A549 (cell line): ENCODE measurements at regions of chr6 and their contacts with region 1.

Region 1: DNA sequence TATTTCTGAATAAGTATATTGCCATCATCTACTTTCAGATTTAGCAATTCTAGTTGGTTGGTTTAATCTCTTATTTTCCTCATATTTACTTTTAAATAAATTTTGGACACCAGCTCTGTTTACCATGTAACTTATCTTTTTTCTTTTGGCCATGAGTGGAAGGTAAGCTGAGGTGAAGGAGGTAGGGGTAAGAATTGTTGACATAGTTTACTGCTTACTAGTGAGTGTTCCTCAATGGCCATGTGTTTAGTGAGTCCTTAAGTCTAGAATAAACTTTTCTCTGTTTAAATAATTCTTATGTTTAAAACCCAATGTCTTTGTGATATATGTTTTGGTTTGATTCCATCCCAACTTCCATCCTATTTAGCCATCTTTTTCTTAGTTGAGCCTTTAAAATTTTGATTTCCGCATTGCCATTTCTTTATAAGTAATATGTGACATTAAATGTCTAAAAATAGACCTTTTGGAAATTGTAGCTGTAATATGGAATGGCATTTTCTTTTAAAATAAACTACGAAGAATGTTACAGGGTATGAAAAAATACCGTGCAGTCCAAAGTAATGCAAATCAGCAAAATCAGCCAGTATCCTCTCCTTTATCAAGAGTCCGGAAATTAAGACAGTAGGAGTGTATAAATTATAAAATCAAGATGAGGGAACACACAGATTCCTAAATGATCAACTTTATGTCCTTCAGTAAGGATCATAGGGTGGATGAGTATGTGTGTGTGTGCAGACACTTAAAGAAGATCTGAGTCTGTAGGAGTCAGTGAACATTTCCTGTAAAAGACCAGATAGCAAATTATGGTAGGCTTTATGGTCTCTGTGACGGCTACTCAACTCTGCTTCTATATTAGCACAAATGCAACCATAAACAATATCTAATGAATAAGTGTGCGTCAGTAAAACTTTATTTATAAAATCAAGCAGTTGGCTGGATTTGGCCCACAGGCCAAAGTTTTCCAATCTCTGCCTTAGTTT is 10.3 kb downstream of the STXBP5 start:
- DNase-seq: no peak
- ATAC-seq: no peak
- H3K4me3 ChIP-seq: no peak overlapping the region
- H3K27ac ChIP-seq: no peak overlapping the region
- H3K4me1 ChIP-seq: peaks cover 14% of the 10 kb centered on the region; the same call in 2 of the 3 replicates
- CTCF ChIP-seq: no peak
- EP300 ChIP-seq: no peak
- POLR2A ChIP-seq: no peak
- RAD21 ChIP-seq: no peak

Region 2: GRCh38 chr6:147081140-147081539 is 133.4 kb before region 1 on chr6:
- CTCF ChIA-PET with region 1: no interaction called
- POLR2A ChIA-PET with region 1: no interaction called
- DNase-seq: no peak
- ATAC-seq: no peak
- H3K4me3 ChIP-seq: no peak overlapping the region
- H3K27ac ChIP-seq: no peak overlapping the region
- H3K4me1 ChIP-seq: no peaks in the 10 kb centered on the region
- CTCF ChIP-seq: no peak
- EP300 ChIP-seq: no peak
- POLR2A ChIP-seq: no peak
- RAD21 ChIP-seq: no peak

Region 3: GRCh38 chr6:147158881-147159280 is 55.7 kb before region 1 on chr6:
- CTCF ChIA-PET with region 1: no interaction called
- POLR2A ChIA-PET with region 1: no interaction called
- DNase-seq: no peak
- ATAC-seq: no peak
- H3K4me3 ChIP-seq: no peak overlapping the region
- H3K27ac ChIP-seq: peak overlapping the region in 1 of 2 experiments; percentile 68; a peak in 1 of 6 replicates
- H3K4me1 ChIP-seq: peaks cover 44% of the 10 kb centered on the region
- CTCF ChIP-seq: no peak
- EP300 ChIP-seq: no peak
- POLR2A ChIP-seq: no peak
- RAD21 ChIP-seq: no peak

Region 4: DNA sequence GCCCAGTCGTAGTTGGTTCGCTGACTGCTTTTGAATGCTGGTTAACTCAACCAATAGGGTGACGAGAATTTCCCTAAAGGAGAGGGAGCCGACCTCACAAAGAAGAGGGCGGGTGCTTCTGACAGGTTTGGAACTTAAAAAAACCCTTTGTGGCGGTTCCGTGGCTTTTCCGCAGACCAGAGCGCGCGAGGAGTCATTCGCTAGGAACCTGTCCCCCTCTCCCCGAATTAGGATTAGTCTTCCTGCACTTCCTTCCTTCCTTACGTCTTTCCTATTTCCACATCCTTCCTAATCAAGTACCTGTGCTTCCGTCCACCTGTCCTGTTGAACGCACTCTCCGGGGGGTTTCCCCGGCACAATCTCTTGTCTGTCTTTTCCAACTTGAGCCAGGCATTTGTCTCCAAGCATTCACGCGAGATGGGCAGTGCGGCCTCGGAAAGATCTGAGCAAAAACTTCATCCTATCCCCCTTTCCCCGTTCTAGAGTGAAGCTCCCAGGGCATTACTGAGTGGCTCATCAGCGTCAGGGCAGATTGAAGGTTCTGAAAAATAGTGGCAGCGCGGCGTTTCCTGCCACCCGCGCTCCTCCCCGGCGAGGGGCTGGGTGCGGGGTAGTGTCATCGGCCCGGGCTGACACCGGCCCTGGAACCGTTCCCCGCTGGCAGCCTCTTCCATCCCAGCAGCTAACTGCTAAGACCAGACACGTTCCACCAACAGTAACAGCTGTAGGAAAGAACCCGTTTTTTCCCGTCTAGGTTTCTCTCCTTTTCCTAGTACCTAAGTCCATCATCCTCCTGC is 11.8 kb before region 1 on chr6:
- CTCF ChIA-PET with region 1: interaction called, 5 read pairs
- POLR2A ChIA-PET with region 1: interaction called, 10 read pairs
- DNase-seq: peak; percentile 89 to 94
- ATAC-seq: peak; percentile 90 to 96
- H3K4me3 ChIP-seq: peak overlapping the region; percentile 84
- H3K27ac ChIP-seq: peak overlapping the region; percentile 95 to 100
- H3K4me1 ChIP-seq: peaks cover 15% of the 10 kb centered on the region; the same call in 2 of the 3 replicates
- CTCF ChIP-seq: no peak
- EP300 ChIP-seq: no peak
- POLR2A ChIP-seq: peak; percentile 37
- RAD21 ChIP-seq: no peak